ENCODE measurements at regions of chr11 and their contacts with region 1.

Region 1: GRCh38 chr11:95337175-95337957 is 106.4 kb upstream of the SESN3 start:
- DNase-seq: peak; percentile 36
- ATAC-seq: peak; percentile 84
- H3K4me3 ChIP-seq: no peak overlapping the region
- H3K27ac ChIP-seq: no peak overlapping the region
- H3K4me1 ChIP-seq: peaks cover 6% of the 10 kb centered on the region
- H3K27me3 ChIP-seq: no peaks in the 10 kb centered on the region; a peak in 1 of 4 replicates
- CTCF ChIP-seq: no peak
- EP300 ChIP-seq: no peak
- POLR2A ChIP-seq: no peak
- RAD21 ChIP-seq: no peak

Region 2: DNA sequence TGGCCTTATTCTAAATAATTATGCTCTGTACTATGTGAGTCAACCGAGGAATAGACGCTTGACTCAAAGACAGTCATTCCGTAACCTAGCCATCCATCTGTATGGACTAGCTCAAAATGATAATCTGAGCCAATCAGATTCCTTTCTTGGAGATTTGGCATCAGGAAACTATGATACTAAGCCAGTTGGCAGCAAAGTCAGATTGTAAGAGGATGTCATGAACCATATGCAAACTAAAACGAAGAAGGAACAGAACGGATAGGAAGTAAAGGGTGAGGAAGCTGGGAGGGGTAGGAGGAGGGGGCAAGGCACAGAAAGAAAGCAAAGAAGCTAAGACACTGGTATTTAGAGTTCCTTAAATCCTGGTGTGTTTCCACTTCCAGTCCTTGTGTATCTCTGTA is 95.7 kb before region 1 on chr11:
- CTCF ChIA-PET with region 1: no interaction called
- POLR2A ChIA-PET with region 1: interaction called, 3 read pairs
- RAD21 ChIA-PET with region 1: interaction called, 3 read pairs
- SMC1A ChIA-PET with region 1: interaction called, 11 read pairs
- in situ Hi-C with region 1: no loop called
- intact Hi-C with region 1: loop called (anchors 5 kb)
- DNase-seq: no peak
- ATAC-seq: peak; percentile 88
- H3K4me3 ChIP-seq: peak overlapping the region; percentile 11; the same call in 1 of the 2 replicates
- H3K27ac ChIP-seq: peak overlapping the region; percentile 3; the same call in 1 of the 2 replicates
- H3K4me1 ChIP-seq: peaks cover 9% of the 10 kb centered on the region; the same call in 1 of the 2 replicates
- H3K27me3 ChIP-seq: no peaks in the 10 kb centered on the region
- CTCF ChIP-seq: no peak
- EP300 ChIP-seq: no peak
- POLR2A ChIP-seq: no peak
- RAD21 ChIP-seq: no peak

Region 3: GRCh38 chr11:95248666-95249467 is 88.5 kb before region 1 on chr11:
- CTCF ChIA-PET with region 1: no interaction called
- POLR2A ChIA-PET with region 1: interaction called, 3 read pairs
- RAD21 ChIA-PET with region 1: interaction called, 4 read pairs
- SMC1A ChIA-PET with region 1: interaction called, 11 read pairs
- in situ Hi-C with region 1: no loop called
- intact Hi-C with region 1: loop called (anchors 5 kb)
- DNase-seq: peak; percentile 74
- ATAC-seq: peak; percentile 85
- H3K4me3 ChIP-seq: peak overlapping the region; percentile 41; the same call in 1 of the 2 replicates
- H3K27ac ChIP-seq: peak overlapping the region; percentile 63
- H3K4me1 ChIP-seq: peaks cover 35% of the 10 kb centered on the region
- H3K27me3 ChIP-seq: no peaks in the 10 kb centered on the region
- CTCF ChIP-seq: no peak
- EP300 ChIP-seq: peak in 1 of 2 experiments; percentile 73; a peak in 1 of 4 replicates
- POLR2A ChIP-seq: no peak
- RAD21 ChIP-seq: no peak

Measured in GM12878 (cell line).